IMR-90 (cell line): ENCODE measurements at regions of chr1 and their contacts with region 1.

Region 1: GRCh38 chr1:227111782-227112181 is 171.7 kb downstream of the COQ8A start:
- DNase-seq: no peak
- ATAC-seq: no peak
- H3K4me3 ChIP-seq: no peak overlapping the region
- H3K27ac ChIP-seq: no peak overlapping the region
- H3K4me1 ChIP-seq: no peaks in the 10 kb centered on the region
- H3K27me3 ChIP-seq: no peaks in the 10 kb centered on the region
- CTCF ChIP-seq: no peak
- POLR2A ChIP-seq: no peak
- RAD21 ChIP-seq: no peak

Region 2: DNA sequence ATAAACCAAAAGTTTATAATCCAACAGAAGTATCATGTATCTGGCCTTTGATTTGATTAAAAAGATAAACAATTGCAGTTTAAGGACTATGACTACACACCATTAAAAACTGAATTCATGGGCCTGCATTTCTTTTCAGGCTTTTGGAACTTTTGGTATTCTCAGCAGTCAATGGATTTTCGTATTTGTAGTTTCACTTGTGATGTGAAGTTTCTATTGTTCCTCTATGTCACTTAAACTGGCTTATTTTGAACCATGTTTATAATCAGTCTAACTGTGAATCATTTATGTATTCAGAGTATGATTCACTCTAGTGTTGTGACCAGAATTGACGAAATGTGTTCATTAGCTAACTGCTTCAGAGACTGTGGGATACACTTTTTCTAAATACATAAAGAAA is 38.8 kb before region 1 on chr1:
- CTCF ChIA-PET with region 1: interaction called, 4 read pairs
- POLR2A ChIA-PET with region 1: no interaction called
- dilution Hi-C with region 1: no loop called
- in situ Hi-C with region 1: no loop called
- intact Hi-C with region 1: loop called (anchors 5 kb)
- DNase-seq: peak; percentile 72
- ATAC-seq: peak; percentile 63
- H3K4me3 ChIP-seq: no peak overlapping the region
- H3K27ac ChIP-seq: no peak overlapping the region
- H3K4me1 ChIP-seq: 0 out of 2 replicates have a peak, but pooled peaks cover 2% of the 10 kb centered on the region
- H3K27me3 ChIP-seq: no peaks in the 10 kb centered on the region
- CTCF ChIP-seq: no peak
- POLR2A ChIP-seq: no peak
- RAD21 ChIP-seq: no peak